Activated CD4-positive, alpha-beta T cell treated with anti-CD3 and anti-CD28 coated beads, Interleukin-2, amount 10 ng/mL, durations not matched to agents 24 days and 14 days (primary cell): ENCODE measurements at regions of chr15 and their contacts with region 1.

Region 1: GRCh38 chr15:26891448-26892181 is 24.8 kb downstream of the GABRA5 start:
- DNase-seq: peak; percentile 80
- H3K4me3 Mint-ChIP-seq: no peak overlapping the region
- H3K27ac Mint-ChIP-seq: no peak overlapping the region
- H3K4me1 Mint-ChIP-seq: no peaks in the 10 kb centered on the region
- H3K27me3 Mint-ChIP-seq: no peaks in the 10 kb centered on the region

Region 2: DNA sequence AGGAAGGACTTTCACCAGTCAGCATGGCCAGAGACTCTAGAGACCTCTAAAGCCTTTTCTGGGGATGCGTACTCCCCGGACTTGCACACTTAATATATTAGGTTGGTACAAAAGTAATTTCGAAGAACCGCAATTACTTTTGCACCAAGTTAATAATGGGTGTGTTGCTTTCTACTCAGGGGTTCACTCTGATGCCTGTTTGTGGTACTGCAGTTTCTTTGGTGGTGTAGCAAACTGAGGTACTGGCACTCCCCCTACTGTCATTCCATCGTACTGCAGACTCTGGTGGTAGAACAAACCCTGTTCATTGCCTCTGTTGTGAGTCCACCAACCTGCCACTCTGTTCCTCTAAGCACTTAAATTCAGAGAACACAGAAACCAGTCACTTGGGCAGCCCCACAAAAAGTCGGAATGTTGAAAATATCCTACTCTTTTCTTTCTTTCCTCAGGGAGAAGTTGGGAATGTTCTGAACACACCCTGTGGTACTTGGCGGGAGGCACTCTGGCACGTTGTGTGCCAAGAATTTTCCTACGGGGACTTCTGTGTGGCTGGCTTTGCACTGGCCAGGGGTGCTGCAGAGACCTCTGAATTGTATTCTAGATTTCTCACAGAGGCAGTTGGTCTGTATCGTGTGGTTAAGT is 125.7 kb after region 1 on chr15:
- intact Hi-C with region 1: loop called (anchors 2 kb)
- DNase-seq: peak; percentile 81
- H3K4me3 Mint-ChIP-seq: no peak overlapping the region
- H3K27ac Mint-ChIP-seq: no peak overlapping the region
- H3K4me1 Mint-ChIP-seq: no peaks in the 10 kb centered on the region
- H3K27me3 Mint-ChIP-seq: no peaks in the 10 kb centered on the region